Posterior vena cava (tissue), 2 donors: ENCODE measurements at regions of chr15 and their contacts with region 1.

Region 1: GRCh38 chr15:77107531-77108355 is 36.8 kb upstream of the TSPAN3 start:
- DNase-seq: no peak

Region 2: GRCh38 chr15:77013776-77014131 is 94.0 kb before region 1 on chr15:
- intact Hi-C with region 1: loop called in 1 of 2 experiments (anchors 1 kb)
- DNase-seq: no peak

Region 3: DNA sequence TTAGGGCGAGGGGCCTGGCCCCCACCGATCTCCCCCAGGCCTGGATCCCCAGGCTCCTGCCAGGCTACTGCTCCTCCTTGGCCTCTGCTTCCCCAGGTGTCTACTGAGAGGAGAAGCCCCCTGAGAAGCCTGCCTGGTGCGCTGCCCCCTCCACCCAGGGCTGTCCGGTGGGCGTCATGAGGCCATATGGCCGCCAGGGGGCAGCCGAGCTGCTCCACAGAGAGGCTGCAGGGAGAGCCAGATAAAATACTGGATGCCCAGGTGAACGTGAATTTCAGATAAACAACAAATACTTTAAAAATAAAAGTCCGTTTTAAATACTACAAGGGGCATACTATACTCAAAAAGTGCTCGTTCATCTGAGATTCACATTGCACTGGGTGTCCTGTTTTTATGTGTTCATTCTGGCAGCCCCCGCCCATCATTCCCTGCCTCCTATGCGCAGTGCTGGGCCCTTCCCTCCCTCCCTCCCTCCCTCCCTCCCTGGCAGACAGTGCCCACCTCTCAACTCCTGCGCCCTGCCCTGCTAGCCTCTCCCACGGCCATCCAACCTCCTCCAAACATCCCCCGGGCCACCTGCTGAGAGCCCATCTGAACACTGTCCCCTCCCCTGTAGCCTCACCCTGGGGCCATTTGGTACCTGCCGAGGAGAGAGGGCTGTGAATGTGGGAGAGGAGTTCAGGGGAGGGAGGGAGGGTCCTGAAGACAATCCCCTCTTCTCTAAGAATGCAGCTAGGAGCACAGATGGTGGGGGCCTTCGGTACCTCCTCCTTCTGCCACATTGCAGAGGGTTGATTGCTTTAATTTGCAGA is 83.3 kb before region 1 on chr15:
- intact Hi-C with region 1: loop called in 1 of 2 experiments (anchors 10 kb)
- DNase-seq: peak; percentile 90